GM12878 (cell line): ENCODE measurements at regions of chr22 and their contacts with region 1.

Region 1: DNA sequence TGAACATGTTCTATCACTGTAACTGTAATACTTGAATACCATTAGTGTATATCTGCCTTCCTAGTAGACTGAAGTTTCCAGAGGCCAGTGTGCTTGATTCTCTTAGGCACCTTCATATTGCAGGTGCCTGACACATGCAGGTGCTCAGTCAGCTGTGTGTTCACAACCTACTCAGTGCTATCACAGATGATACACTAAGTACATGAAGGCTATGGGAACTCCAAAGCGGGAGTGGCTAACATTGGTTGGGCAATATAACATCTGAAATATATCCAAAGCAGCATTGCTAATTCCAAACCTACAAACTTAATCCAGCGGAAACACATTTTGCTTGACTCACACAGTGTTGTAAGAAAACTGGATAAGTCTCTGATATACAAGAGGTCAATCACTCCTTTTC is 539.3 kb upstream of the ISX start:
- DNase-seq: no peak
- ATAC-seq: no peak
- H3K4me3 ChIP-seq: no peak overlapping the region
- H3K27ac ChIP-seq: no peak overlapping the region
- H3K4me1 ChIP-seq: no peaks in the 10 kb centered on the region
- H3K27me3 ChIP-seq: no peaks in the 10 kb centered on the region
- CTCF ChIP-seq: no peak
- EP300 ChIP-seq: no peak
- POLR2A ChIP-seq: no peak
- RAD21 ChIP-seq: no peak

Region 2: GRCh38 chr22:34475886-34476285 is 50.8 kb before region 1 on chr22:
- CTCF ChIA-PET with region 1: no interaction called
- POLR2A ChIA-PET with region 1: no interaction called
- RAD21 ChIA-PET with region 1: no interaction called
- SMC1A ChIA-PET with region 1: no interaction called
- in situ Hi-C with region 1: loop called (anchors 5 kb)
- intact Hi-C with region 1: no loop called
- DNase-seq: no peak
- ATAC-seq: no peak
- H3K4me3 ChIP-seq: no peak overlapping the region
- H3K27ac ChIP-seq: no peak overlapping the region
- H3K4me1 ChIP-seq: no peaks in the 10 kb centered on the region
- H3K27me3 ChIP-seq: no peaks in the 10 kb centered on the region
- CTCF ChIP-seq: no peak
- EP300 ChIP-seq: no peak
- POLR2A ChIP-seq: no peak
- RAD21 ChIP-seq: no peak